Breast epithelium (tissue), 4 donors: ENCODE measurements at regions of chr2 and their contacts with region 1.

Region 1: GRCh38 chr2:21326152-21326551 is 202.4 kb downstream of the TDRD15 start:
- DNase-seq: no peak
- H3K4me3 ChIP-seq: no peak overlapping the region
- H3K27ac ChIP-seq: no peak overlapping the region
- H3K4me1 ChIP-seq: no peaks in the 10 kb centered on the region
- H3K27me3 ChIP-seq: no peaks in the 10 kb centered on the region
- CTCF ChIP-seq: no peak
- POLR2A ChIP-seq: no peak

Region 2: GRCh38 chr2:21103274-21103891 is 222.8 kb before region 1 on chr2:
- intact Hi-C with region 1: no loop called
- DNase-seq: no peak
- H3K4me3 ChIP-seq: no peak overlapping the region
- H3K27ac ChIP-seq: no peak overlapping the region
- H3K4me1 ChIP-seq: no peaks in the 10 kb centered on the region
- H3K27me3 ChIP-seq: no peaks in the 10 kb centered on the region
- CTCF ChIP-seq: no peak
- POLR2A ChIP-seq: no peak

Region 3: DNA sequence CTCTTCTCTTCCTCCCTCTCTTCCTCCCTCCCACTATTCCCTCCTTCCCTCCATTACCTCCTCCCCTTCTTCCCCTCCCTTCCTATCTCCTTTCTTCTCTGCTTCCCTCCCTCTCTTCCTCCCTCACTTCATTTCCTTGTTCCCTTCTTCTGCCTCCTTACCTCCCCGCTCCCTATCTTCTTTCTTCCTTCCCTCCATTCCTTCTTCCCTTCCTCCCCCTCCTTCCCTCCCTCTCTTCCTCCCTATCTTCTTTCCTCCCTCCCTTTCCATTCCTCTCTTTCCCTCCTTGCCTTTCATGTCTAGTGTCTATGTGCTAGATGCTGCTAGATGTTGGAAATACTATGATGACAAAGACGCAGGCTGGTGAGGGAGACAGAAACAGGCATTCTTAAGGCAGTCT is 43.6 kb after region 1 on chr2:
- intact Hi-C with region 1: loop called (anchors 2 kb)
- DNase-seq: no peak
- H3K4me3 ChIP-seq: no peak overlapping the region
- H3K27ac ChIP-seq: no peak overlapping the region
- H3K4me1 ChIP-seq: no peaks in the 10 kb centered on the region
- H3K27me3 ChIP-seq: no peaks in the 10 kb centered on the region
- CTCF ChIP-seq: no peak
- POLR2A ChIP-seq: no peak

Region 4: GRCh38 chr2:22907330-22907729 is 1581.2 kb after region 1 on chr2:
- intact Hi-C with region 1: no loop called
- DNase-seq: peak in 1 of 2 donors; percentile 33
- H3K4me3 ChIP-seq: no peak overlapping the region
- H3K27ac ChIP-seq: peak overlapping the region in 1 of 2 donors; percentile 27
- H3K4me1 ChIP-seq: no peaks in the 10 kb centered on the region
- H3K27me3 ChIP-seq: no peaks in the 10 kb centered on the region
- CTCF ChIP-seq: no peak
- POLR2A ChIP-seq: no peak